ENCODE measurements at regions of chr17 and their contacts with region 1.

Region 1: DNA sequence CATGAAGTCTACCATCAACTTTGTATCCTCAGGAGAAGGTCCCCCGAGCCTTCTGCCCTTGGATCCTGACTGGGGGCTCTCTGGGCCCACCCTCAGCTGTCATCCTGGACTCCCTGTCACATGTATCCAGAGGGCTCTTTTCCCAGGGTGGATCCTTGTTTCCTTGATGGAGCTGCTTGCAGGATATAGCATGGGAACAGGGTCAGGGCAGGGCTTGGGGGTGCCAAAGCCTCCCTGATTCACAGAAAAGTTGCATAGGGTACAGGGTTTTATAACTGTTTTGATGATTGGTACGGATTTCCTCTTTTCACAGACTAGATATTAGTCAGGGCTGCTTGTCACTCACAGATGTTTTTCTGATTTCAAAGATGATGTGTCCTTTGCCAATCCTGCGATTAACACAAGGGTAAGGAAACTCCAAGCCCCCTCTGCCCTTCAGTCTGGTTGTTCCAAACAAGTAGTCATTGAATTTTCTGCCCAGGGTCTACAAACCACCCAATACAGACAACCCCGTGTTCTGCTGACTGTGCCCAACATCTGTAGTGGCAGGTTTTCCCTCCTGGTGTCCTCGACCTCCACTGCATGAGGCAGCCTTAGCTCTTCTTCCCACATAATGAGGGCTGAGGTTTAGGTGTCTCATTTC is 20.6 kb upstream of the SLC35G3 start:
- DNase-seq: peak in 8 of 9 experiments; percentile 16 to 74 (median 48)
- ATAC-seq: peak; percentile 50
- H3K4me3 ChIP-seq: peak overlapping the region; percentile 33 to 42
- H3K4me3 Mint-ChIP-seq: peak overlapping the region; percentile 67
- H3K27ac ChIP-seq: peak overlapping the region; percentile 77 to 84
- H3K27ac Mint-ChIP-seq: peak overlapping the region; percentile 98
- H3K4me1 ChIP-seq: peaks cover 90% of the 10 kb centered on the region
- H3K4me1 Mint-ChIP-seq: peaks cover 89% of the 10 kb centered on the region
- H3K27me3 ChIP-seq: no peaks in the 10 kb centered on the region
- H3K27me3 Mint-ChIP-seq: no peaks in the 10 kb centered on the region
- CTCF ChIP-seq: no peak

Region 2: GRCh38 chr17:35170968-35171771 is 43.6 kb before region 1 on chr17:
- CTCF ChIA-PET with region 1: interaction called, 3 read pairs
- POLR2A ChIA-PET with region 1: interaction called, 4 read pairs
- intact Hi-C with region 1: loop called (anchors 1 kb)
- DNase-seq: peak in 5 of 9 experiments; percentile 31 to 70 (median 62)
- ATAC-seq: peak; percentile 79
- H3K4me3 ChIP-seq: peak overlapping the region; percentile 10 to 31
- H3K4me3 Mint-ChIP-seq: peak overlapping the region; percentile 57
- H3K27ac ChIP-seq: peak overlapping the region in 1 of 2 experiments; percentile 51
- H3K27ac Mint-ChIP-seq: peak overlapping the region; percentile 90
- H3K4me1 ChIP-seq: peaks cover 37% of the 10 kb centered on the region
- H3K4me1 Mint-ChIP-seq: peaks cover 46% of the 10 kb centered on the region
- H3K27me3 ChIP-seq: no peaks in the 10 kb centered on the region
- H3K27me3 Mint-ChIP-seq: no peaks in the 10 kb centered on the region
- CTCF ChIP-seq: peak; percentile 69

Region 3: DNA sequence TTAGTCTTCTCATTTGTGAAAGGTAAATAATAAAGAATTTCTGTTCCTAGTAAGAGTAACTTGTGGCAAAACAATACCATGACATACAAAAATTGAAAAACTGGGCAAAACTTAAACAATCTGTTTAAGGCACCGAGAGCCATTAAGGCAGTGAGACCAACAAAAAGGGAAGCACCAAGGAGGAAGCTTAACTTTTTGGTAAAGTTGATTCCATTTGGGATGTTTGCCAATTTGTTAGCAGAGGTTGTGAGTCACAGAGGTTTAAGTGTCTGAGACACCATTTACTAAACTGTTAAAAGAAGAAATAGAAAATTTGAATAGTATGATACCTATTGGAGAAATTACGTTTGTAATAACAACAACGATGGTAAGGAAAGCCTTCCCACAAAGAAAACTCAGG is 25.5 kb before region 1 on chr17:
- CTCF ChIA-PET with region 1: interaction called, 11 read pairs
- POLR2A ChIA-PET with region 1: interaction called, 15 read pairs
- intact Hi-C with region 1: loop called in 1 of 2 experiments (anchors 2 kb)
- DNase-seq: no peak
- ATAC-seq: no peak
- H3K4me3 ChIP-seq: peak overlapping the region; percentile 3 to 33
- H3K4me3 Mint-ChIP-seq: peak overlapping the region; percentile 79
- H3K27ac ChIP-seq: peak overlapping the region; percentile 7 to 52
- H3K27ac Mint-ChIP-seq: peak overlapping the region; percentile 92
- H3K4me1 ChIP-seq: peaks cover 66% of the 10 kb centered on the region
- H3K4me1 Mint-ChIP-seq: peaks cover 79% of the 10 kb centered on the region
- H3K27me3 ChIP-seq: no peaks in the 10 kb centered on the region
- H3K27me3 Mint-ChIP-seq: no peaks in the 10 kb centered on the region
- CTCF ChIP-seq: no peak

Region 4: GRCh38 chr17:35235917-35236316 is 21.2 kb after region 1 on chr17:
- CTCF ChIA-PET with region 1: interaction called, 31 read pairs
- POLR2A ChIA-PET with region 1: interaction called, 145 read pairs
- intact Hi-C with region 1: no loop called
- DNase-seq: no peak
- ATAC-seq: peak; percentile 39
- H3K4me3 ChIP-seq: no peak overlapping the region
- H3K4me3 Mint-ChIP-seq: peak overlapping the region; percentile 24
- H3K27ac ChIP-seq: no peak overlapping the region
- H3K27ac Mint-ChIP-seq: peak overlapping the region; percentile 100
- H3K4me1 ChIP-seq: peaks cover 75% of the 10 kb centered on the region
- H3K4me1 Mint-ChIP-seq: peaks cover 85% of the 10 kb centered on the region
- H3K27me3 ChIP-seq: no peaks in the 10 kb centered on the region
- H3K27me3 Mint-ChIP-seq: no peaks in the 10 kb centered on the region
- CTCF ChIP-seq: no peak

Region 5: DNA sequence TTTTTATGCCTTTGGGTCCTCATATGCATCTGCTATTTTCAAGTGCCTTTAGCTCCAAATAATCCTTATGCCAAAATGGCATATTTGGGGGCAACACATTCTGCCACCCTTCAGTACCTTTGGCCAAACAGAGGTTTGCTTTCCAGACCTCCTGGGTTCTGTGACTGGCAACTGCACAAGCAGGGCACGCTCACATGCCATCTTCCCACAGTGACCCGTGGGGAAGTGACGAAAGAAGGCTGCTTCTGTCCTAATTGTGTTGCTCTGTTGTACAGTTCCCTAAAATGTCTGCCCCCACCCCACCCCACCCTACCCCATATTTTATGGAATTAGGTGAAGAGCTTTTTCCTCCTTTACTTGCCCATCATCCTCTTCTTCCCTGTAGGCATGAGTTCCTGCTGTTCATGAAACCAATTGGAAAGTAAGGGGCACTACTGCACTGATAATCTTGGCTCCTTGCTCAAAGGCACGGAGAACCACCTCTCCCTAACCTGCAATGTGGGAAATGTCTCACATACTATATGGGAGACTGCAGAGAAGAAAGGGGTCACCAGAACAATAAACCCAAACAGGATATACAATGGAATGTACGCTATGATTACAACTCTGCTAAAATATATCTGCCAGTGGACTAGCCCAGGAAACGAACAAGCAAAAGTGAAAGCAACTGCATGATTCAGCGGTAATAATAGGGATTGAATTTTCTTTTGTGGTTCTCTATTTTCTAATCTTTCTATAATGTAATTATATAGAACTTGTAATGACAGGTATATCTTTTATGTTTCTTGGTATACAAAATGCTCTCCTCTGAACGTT is 326.0 kb after region 1 on chr17:
- CTCF ChIA-PET with region 1: interaction called, 3 read pairs
- POLR2A ChIA-PET with region 1: interaction called, 10 read pairs
- intact Hi-C with region 1: no loop called
- DNase-seq: peak in 7 of 9 experiments; percentile 17 to 76 (median 47)
- ATAC-seq: peak; percentile 34
- H3K4me3 ChIP-seq: peak overlapping the region; percentile 56 to 59
- H3K4me3 Mint-ChIP-seq: peak overlapping the region; percentile 88
- H3K27ac ChIP-seq: peak overlapping the region; percentile 63 to 89
- H3K27ac Mint-ChIP-seq: peak overlapping the region; percentile 93
- H3K4me1 ChIP-seq: peaks cover 31% of the 10 kb centered on the region
- H3K4me1 Mint-ChIP-seq: peaks cover 49% of the 10 kb centered on the region
- H3K27me3 ChIP-seq: no peaks in the 10 kb centered on the region
- H3K27me3 Mint-ChIP-seq: no peaks in the 10 kb centered on the region
- CTCF ChIP-seq: no peak

Region 6: GRCh38 chr17:35587074-35587971 is 372.6 kb after region 1 on chr17 and contains the start of gene AP2B1:
- CTCF ChIA-PET with region 1: interaction called, 6 read pairs
- POLR2A ChIA-PET with region 1: no interaction called
- intact Hi-C with region 1: loop called in 1 of 2 experiments (anchors 1 kb)
- DNase-seq: peak; percentile 96 to 100 (median 97)
- ATAC-seq: peak; percentile 98
- H3K4me3 ChIP-seq: peak within 1 kb of the TSS; percentile 84 to 92
- H3K4me3 Mint-ChIP-seq: peak within 1 kb of the TSS; percentile 99
- H3K27ac ChIP-seq: peak within 1 kb of the TSS; percentile 86 to 93
- H3K27ac Mint-ChIP-seq: peak within 1 kb of the TSS; percentile 98
- H3K4me1 ChIP-seq: peaks cover 21% of the 10 kb centered on the region
- H3K4me1 Mint-ChIP-seq: peaks cover 38% of the 10 kb centered on the region
- H3K27me3 ChIP-seq: no peaks in the 10 kb centered on the region
- H3K27me3 Mint-ChIP-seq: no peaks in the 10 kb centered on the region
- CTCF ChIP-seq: no peak
- total RNA-seq, gene AP2B1: 58.7 to 65.7 TPM